ENCODE measurements at regions of chr6 and their contacts with region 1.

Region 1: GRCh38 chr6:147202516-147203312 is 1.5 kb upstream of the STXBP5 start:
- DNase-seq: peak; percentile 94
- H3K4me3 ChIP-seq: peak overlapping the region; percentile 82 to 90
- H3K27ac ChIP-seq: peak overlapping the region; percentile 94 to 95
- H3K4me1 ChIP-seq: no peaks in the 10 kb centered on the region
- H3K27me3 ChIP-seq: no peaks in the 10 kb centered on the region
- CTCF ChIP-seq: no peak
- POLR2A ChIP-seq: peak; percentile 83

Region 2: GRCh38 chr6:146498309-146498708 is 704.4 kb before region 1 on chr6:
- intact Hi-C with region 1: no loop called
- DNase-seq: no peak
- H3K4me3 ChIP-seq: no peak overlapping the region
- H3K27ac ChIP-seq: no peak overlapping the region
- H3K4me1 ChIP-seq: no peaks in the 10 kb centered on the region
- H3K27me3 ChIP-seq: no peaks in the 10 kb centered on the region
- CTCF ChIP-seq: no peak
- POLR2A ChIP-seq: no peak

Region 3: GRCh38 chr6:146767632-146768031 is 435.1 kb before region 1 on chr6:
- intact Hi-C with region 1: no loop called
- DNase-seq: no peak
- H3K4me3 ChIP-seq: no peak overlapping the region
- H3K27ac ChIP-seq: no peak overlapping the region
- H3K4me1 ChIP-seq: no peaks in the 10 kb centered on the region
- H3K27me3 ChIP-seq: no peaks in the 10 kb centered on the region
- CTCF ChIP-seq: no peak
- POLR2A ChIP-seq: no peak

Region 4: DNA sequence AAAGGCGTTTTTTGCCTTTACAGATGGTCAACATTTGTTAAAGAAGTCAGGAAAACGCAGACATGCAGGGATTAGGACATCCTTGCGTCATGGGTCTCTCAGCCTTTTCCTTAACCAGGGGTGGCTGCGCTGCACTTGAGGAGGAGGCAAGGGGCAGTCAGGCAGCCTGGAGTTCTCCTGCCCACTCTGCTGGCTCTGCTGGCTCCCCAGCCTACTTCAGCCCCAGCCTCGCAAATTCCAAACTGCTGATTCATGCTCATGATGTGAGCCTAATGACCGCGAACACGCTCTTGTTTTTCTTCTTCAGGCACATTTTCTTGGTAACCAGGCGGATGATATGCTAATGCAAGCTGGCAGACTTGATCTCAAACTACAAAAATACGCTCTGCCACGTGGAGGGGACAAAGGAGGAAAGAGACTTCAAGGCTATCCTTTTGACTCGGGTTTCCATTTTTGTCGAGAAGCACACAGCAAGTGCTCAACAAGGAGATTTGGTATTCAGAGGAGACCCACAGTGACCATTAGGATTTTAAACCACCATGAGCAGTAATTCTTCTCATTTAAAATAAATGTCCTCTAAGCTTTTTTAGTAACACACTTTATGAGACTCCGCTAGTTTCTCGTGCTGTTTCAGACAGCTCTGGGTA is 288.7 kb before region 1 on chr6:
- intact Hi-C with region 1: loop called (anchors 10 kb)
- DNase-seq: peak; percentile 24
- H3K4me3 ChIP-seq: no peak overlapping the region
- H3K27ac ChIP-seq: no peak overlapping the region
- H3K4me1 ChIP-seq: no peaks in the 10 kb centered on the region
- H3K27me3 ChIP-seq: no peaks in the 10 kb centered on the region
- CTCF ChIP-seq: no peak
- POLR2A ChIP-seq: no peak

Region 5: DNA sequence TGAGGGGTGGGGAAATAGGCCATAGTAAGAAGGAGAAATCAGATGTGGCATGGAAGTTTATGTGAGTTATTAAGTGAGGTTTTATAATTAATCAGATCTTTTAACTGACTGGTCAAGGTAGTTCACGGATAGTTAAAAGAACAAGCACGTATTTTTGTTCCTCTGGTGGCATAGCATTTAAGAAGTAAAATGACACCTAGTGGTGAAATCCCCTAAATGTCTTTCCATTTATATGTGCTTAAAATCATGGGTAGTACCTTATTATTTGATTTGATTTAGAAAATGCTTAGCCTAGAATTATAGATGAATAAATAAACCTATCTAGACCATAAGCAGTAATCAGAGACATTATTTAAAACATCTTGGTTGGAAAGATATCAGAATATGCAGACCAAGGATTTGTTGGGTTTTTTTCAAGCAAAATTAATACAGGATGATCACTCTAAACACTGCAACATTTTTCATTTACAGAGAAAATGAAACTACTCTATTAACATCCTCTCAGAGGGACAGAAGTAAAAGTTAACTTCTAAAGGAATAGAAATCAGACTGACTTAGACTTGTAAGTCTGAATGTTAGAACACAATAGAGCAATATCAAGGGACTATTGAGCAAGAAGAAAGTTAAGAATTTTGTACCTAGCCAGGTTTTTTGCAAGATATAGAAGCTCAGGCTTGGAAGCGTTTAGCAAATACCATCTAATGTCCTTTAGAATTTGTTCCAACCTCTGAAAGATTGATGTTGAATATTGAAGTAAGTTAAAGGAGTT is 82.6 kb after region 1 on chr6:
- intact Hi-C with region 1: loop called (anchors 10 kb)
- DNase-seq: no peak
- H3K4me3 ChIP-seq: no peak overlapping the region
- H3K27ac ChIP-seq: no peak overlapping the region
- H3K4me1 ChIP-seq: no peaks in the 10 kb centered on the region
- H3K27me3 ChIP-seq: no peaks in the 10 kb centered on the region
- CTCF ChIP-seq: peak in 3 of 4 experiments; percentile 56 to 66 (median 56)
- POLR2A ChIP-seq: no peak

Region 6: GRCh38 chr6:147418523-147418922 is 215.8 kb after region 1 on chr6:
- intact Hi-C with region 1: no loop called
- DNase-seq: no peak
- H3K4me3 ChIP-seq: no peak overlapping the region
- H3K27ac ChIP-seq: no peak overlapping the region
- H3K4me1 ChIP-seq: no peaks in the 10 kb centered on the region
- H3K27me3 ChIP-seq: no peaks in the 10 kb centered on the region
- CTCF ChIP-seq: no peak
- POLR2A ChIP-seq: no peak

Region 7: GRCh38 chr6:147579667-147580066 is 377.0 kb after region 1 on chr6:
- intact Hi-C with region 1: no loop called
- DNase-seq: no peak
- H3K4me3 ChIP-seq: no peak overlapping the region
- H3K27ac ChIP-seq: no peak overlapping the region
- H3K4me1 ChIP-seq: no peaks in the 10 kb centered on the region
- H3K27me3 ChIP-seq: no peaks in the 10 kb centered on the region
- CTCF ChIP-seq: no peak
- POLR2A ChIP-seq: no peak

Measured in prostate gland (tissue), 2 donors.